Body of pancreas (tissue), 4 donors: ENCODE measurements at regions of chr1 and their contacts with region 1.

Region 1: DNA sequence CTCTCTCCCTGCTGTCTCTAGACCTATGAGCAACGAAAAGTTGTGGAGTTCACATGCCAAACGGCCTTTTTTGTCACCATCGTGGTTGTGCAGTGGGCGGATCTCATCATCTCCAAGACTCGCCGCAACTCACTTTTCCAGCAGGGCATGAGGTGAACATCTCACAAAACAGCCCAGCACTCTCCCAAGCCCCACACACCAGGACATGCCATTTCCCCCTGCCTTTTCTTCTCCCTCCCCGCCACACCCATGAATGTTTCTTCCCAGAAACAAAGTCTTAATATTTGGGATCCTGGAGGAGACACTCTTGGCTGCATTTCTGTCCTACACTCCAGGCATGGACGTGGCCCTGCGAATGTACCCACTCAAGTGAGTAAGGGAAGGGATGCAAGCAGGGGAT is 8.7 kb upstream of the CASQ1 start:
- DNase-seq: no peak
- ATAC-seq: no peak
- H3K4me3 ChIP-seq: no peak overlapping the region
- H3K27ac ChIP-seq: no peak overlapping the region
- H3K4me1 ChIP-seq: no peaks in the 10 kb centered on the region
- H3K27me3 ChIP-seq: no peaks in the 10 kb centered on the region
- CTCF ChIP-seq: no peak
- POLR2A ChIP-seq: no peak

Region 2: GRCh38 chr1:160046494-160047110 is 135.1 kb before region 1 on chr1:
- intact Hi-C with region 1: no loop called
- DNase-seq: peak; percentile 64 to 83 (median 80)
- ATAC-seq: peak; percentile 92
- H3K4me3 ChIP-seq: no peak overlapping the region
- H3K27ac ChIP-seq: peak overlapping the region in 3 of 4 donors; percentile 11 to 35 (median 15)
- H3K4me1 ChIP-seq: peaks cover 11% of the 10 kb centered on the region
- H3K27me3 ChIP-seq: no peaks in the 10 kb centered on the region
- CTCF ChIP-seq: peak; percentile 43 to 88 (median 81)
- POLR2A ChIP-seq: peak in 2 of 3 donors; percentile 26 to 28

Region 3: GRCh38 chr1:160117709-160118183 is 63.9 kb before region 1 on chr1:
- intact Hi-C with region 1: loop called (anchors 5 kb)
- DNase-seq: peak in 2 of 4 donors; percentile 34 to 43
- ATAC-seq: no peak
- H3K4me3 ChIP-seq: no peak overlapping the region
- H3K27ac ChIP-seq: no peak overlapping the region
- H3K4me1 ChIP-seq: no peaks in the 10 kb centered on the region
- H3K27me3 ChIP-seq: peaks cover 0 to 3% of the 10 kb centered on the region in 2 donors
- CTCF ChIP-seq: no peak
- POLR2A ChIP-seq: no peak